ENCODE measurements at regions of chr2 and their contacts with region 1.

Region 1: DNA sequence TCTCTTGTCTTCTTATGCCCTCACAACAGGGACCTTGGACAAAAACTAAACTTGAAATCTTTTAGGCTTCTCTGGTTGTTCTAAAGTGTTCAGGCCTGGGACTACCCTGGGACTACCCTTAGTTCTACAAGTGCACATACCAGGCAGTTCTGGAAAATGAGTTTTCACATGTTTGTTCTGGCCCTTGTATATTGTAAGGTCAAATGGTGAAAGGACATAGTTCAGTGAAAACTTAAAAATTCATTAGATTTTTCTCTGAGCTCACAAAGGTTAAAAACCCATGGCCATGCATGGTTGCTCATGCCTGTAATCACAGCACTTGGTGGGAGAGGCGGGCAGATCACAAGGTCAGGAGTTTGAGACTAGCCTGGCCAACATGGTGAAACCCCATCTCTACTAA is 875.5 kb upstream of the FAM98A start:
- DNase-seq: no peak
- ATAC-seq: no peak
- H3K4me3 ChIP-seq: no peak overlapping the region
- H3K27ac ChIP-seq: no peak overlapping the region
- H3K4me1 ChIP-seq: no peaks in the 10 kb centered on the region
- H3K27me3 ChIP-seq: no peaks in the 10 kb centered on the region

Region 2: GRCh38 chr2:32678825-32679224 is 1795.8 kb before region 1 on chr2:
- intact Hi-C with region 1: no loop called
- DNase-seq: no peak
- ATAC-seq: no peak
- H3K4me3 ChIP-seq: no peak overlapping the region
- H3K27ac ChIP-seq: no peak overlapping the region
- H3K4me1 ChIP-seq: no peaks in the 10 kb centered on the region
- H3K27me3 ChIP-seq: no peaks in the 10 kb centered on the region

Region 3: DNA sequence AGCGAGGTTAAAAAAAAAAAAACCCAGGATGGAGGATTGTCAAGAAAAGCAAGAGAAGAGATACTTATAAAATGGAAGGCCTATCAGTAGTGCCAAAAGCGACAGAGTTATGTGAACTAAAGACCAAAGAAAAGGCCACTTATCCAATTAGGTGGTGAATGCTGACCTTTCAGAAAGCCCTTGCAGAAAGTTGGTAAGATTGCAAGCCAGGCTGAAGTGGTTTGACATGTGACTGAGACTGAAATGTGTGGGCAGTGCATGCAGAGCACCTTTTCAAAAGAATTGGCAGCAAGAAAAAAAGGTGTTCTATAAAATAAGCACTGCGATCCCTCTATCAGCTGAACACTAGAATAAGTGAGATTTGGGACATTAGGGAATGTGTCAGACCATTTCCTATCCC is 496.2 kb before region 1 on chr2:
- intact Hi-C with region 1: no loop called
- DNase-seq: no peak
- ATAC-seq: no peak
- H3K4me3 ChIP-seq: no peak overlapping the region
- H3K27ac ChIP-seq: no peak overlapping the region
- H3K4me1 ChIP-seq: no peaks in the 10 kb centered on the region
- H3K27me3 ChIP-seq: no peaks in the 10 kb centered on the region

Region 4: GRCh38 chr2:34419856-34420255 is 54.8 kb before region 1 on chr2:
- intact Hi-C with region 1: no loop called
- DNase-seq: no peak
- ATAC-seq: no peak
- H3K4me3 ChIP-seq: no peak overlapping the region
- H3K27ac ChIP-seq: no peak overlapping the region
- H3K4me1 ChIP-seq: no peaks in the 10 kb centered on the region
- H3K27me3 ChIP-seq: no peaks in the 10 kb centered on the region

Region 5: GRCh38 chr2:34519659-34520058 is 45.0 kb after region 1 on chr2:
- intact Hi-C with region 1: loop called in 1 of 4 experiments (anchors 5 kb)
- DNase-seq: no peak
- ATAC-seq: no peak
- H3K4me3 ChIP-seq: no peak overlapping the region
- H3K27ac ChIP-seq: no peak overlapping the region
- H3K4me1 ChIP-seq: no peaks in the 10 kb centered on the region
- H3K27me3 ChIP-seq: no peaks in the 10 kb centered on the region

Region 6: GRCh38 chr2:35184471-35184870 is 709.8 kb after region 1 on chr2:
- intact Hi-C with region 1: no loop called
- DNase-seq: no peak
- ATAC-seq: no peak
- H3K4me3 ChIP-seq: no peak overlapping the region
- H3K27ac ChIP-seq: no peak overlapping the region
- H3K4me1 ChIP-seq: no peaks in the 10 kb centered on the region
- H3K27me3 ChIP-seq: no peaks in the 10 kb centered on the region

Measured in right cardiac atrium (tissue), 5 donors.